Caco-2 (cell line): ENCODE measurements at regions of chr6 and their contacts with region 1.

Region 1: DNA sequence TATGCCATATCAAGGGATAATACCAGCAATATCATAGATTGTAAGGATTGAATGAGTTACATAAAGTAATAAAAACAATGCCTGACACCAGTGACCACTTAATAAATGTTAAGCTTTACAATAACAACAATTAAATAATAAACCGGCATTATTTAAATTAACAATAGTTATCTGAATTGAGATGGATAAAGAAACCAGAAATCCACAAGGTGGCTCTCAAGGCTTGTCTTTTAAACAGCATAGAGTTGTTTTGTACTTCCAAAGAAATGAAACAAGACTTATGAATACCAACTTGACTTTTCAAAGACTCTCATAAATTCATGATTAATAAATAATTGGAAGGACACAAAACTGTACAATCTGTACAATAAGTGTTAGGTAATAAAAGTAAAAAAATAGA is 203.1 kb downstream of the ASCC3 start:
- DNase-seq: no peak
- H3K4me3 ChIP-seq: no peak overlapping the region
- H3K4me3 Mint-ChIP-seq: no peak overlapping the region
- H3K27ac Mint-ChIP-seq: no peak overlapping the region
- H3K4me1 ChIP-seq: no peaks in the 10 kb centered on the region
- H3K4me1 Mint-ChIP-seq: no peaks in the 10 kb centered on the region
- H3K27me3 ChIP-seq: no peaks in the 10 kb centered on the region
- H3K27me3 Mint-ChIP-seq: no peaks in the 10 kb centered on the region
- CTCF ChIP-seq: no peak

Region 2: DNA sequence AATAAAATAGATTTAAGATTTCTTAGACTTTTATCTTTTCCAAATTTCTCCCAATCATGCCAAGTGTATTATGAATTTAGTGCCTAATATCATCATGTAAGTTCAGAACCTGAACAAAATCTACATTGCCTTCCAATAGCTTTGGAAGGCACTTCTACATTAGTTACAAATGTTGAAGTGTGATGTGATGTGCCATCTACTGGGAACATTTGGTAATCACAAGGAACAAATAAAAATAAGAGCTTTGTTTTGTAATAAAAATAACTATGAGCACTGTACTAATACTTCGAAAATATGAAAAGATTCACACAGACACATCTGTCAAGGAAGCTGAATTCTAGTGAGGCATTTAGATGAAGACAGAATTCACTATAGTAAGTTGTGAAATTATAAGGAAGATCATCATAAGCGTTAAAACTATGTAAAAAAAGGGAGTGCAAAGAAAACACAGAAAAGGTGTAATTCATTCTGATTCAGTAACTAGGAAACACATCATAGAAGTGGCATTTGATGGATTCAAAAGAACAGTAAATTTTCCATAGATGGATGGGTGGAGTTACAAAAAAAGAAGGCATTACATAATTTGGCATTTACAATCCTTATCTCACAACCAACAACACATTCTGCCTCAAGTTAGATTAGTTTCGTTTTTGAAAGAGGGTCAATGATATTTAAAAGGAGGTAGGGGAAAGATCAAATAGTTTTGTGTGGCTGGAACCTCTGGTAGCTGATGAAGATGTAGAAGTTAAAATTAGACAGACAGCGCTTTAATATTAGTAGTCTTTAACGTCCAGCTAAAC is 42.1 kb after region 1 on chr6:
- CTCF ChIA-PET with region 1: interaction called, 3 read pairs
- POLR2A ChIA-PET with region 1: no interaction called
- intact Hi-C with region 1: loop called (anchors 2 kb)
- DNase-seq: peak in 1 of 2 experiments; percentile 22
- H3K4me3 ChIP-seq: no peak overlapping the region
- H3K4me3 Mint-ChIP-seq: no peak overlapping the region
- H3K27ac Mint-ChIP-seq: no peak overlapping the region
- H3K4me1 ChIP-seq: peaks cover 4% of the 10 kb centered on the region; the same call in 1 of the 2 replicates
- H3K4me1 Mint-ChIP-seq: peaks cover 11% of the 10 kb centered on the region
- H3K27me3 ChIP-seq: no peaks in the 10 kb centered on the region
- H3K27me3 Mint-ChIP-seq: no peaks in the 10 kb centered on the region
- CTCF ChIP-seq: peak; percentile 29 to 39

Region 3: DNA sequence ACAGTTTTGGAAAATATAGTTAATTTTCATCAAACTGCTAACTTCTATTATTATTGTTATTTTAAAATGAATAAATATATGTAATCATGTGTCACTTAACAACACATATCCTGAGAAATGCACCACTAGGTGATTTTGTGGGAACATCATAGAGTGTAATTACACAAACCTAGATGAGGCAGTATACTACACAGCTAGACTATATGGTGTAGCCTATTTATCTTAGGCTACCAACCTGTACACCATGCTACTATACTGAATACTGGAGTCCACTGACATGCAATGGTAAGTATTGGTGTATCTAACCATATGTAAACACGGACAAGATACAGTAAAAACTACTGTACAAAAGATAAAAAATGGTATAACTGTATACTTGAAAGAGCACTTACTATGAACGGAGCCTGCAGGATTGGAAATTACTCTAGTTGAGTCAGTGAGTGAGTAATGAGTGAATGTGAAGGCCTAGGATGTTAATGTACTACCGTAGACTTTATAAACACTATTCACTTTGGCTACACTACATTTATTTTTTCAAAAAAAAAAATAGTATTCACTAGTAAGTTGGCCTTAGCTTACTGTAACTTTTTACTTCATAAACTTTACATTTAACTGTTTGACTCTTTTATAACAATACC is 130.7 kb after region 1 on chr6:
- CTCF ChIA-PET with region 1: no interaction called
- POLR2A ChIA-PET with region 1: no interaction called
- intact Hi-C with region 1: no loop called
- DNase-seq: no peak
- H3K4me3 ChIP-seq: no peak overlapping the region
- H3K4me3 Mint-ChIP-seq: no peak overlapping the region
- H3K27ac Mint-ChIP-seq: no peak overlapping the region
- H3K4me1 ChIP-seq: no peaks in the 10 kb centered on the region
- H3K4me1 Mint-ChIP-seq: no peaks in the 10 kb centered on the region
- H3K27me3 ChIP-seq: no peaks in the 10 kb centered on the region
- H3K27me3 Mint-ChIP-seq: no peaks in the 10 kb centered on the region
- CTCF ChIP-seq: no peak